Activated CD4-positive, alpha-beta memory T cell treated with anti-CD3 and anti-CD28 coated beads for 36 hours (primary cell): ENCODE measurements at regions of chr11 and their contacts with region 1.

Region 1: DNA sequence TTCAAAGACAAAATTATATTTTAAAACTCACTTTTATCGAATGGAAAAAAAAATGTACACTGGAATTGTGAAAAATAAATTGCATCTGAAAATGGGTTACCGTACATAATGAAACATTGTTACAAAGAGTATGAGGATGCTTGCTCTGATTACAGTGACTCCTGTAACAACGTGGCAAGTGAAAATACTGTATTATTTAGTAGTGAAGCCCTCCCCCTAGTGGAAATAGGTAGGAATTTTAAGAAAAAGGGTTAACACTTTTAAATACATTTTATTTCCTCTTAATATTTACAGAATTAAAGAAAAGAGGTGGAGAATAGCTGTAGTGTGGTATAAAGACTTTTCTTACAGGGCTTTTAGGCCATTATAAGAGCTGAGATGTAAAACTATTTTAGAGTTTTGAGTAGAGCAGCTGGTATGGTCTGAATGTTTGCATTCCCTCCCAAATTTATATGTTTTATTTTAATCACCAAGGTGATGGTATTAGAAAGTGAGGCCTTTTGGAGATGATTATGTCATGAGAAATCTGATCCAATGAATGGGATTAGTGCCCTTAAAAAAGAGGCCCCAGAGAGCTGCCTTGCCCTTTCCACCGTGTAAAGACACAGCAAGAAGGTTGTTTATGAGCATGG is 25.2 kb downstream of the FAM76B start:
- DNase-seq: no peak
- H3K4me3 Mint-ChIP-seq: no peak overlapping the region
- H3K27ac Mint-ChIP-seq: no peak overlapping the region
- H3K4me1 Mint-ChIP-seq: no peaks in the 10 kb centered on the region
- H3K27me3 Mint-ChIP-seq: no peaks in the 10 kb centered on the region

Region 2: GRCh38 chr11:95157824-95158223 is 606.6 kb before region 1 on chr11:
- CTCF ChIA-PET with region 1: interaction called, 207 read pairs
- POLR2A ChIA-PET with region 1: no interaction called
- intact Hi-C with region 1: no loop called
- DNase-seq: peak; percentile 30
- H3K4me3 Mint-ChIP-seq: no peak overlapping the region
- H3K27ac Mint-ChIP-seq: no peak overlapping the region
- H3K4me1 Mint-ChIP-seq: peaks cover 33% of the 10 kb centered on the region
- H3K27me3 Mint-ChIP-seq: no peaks in the 10 kb centered on the region

Region 3: DNA sequence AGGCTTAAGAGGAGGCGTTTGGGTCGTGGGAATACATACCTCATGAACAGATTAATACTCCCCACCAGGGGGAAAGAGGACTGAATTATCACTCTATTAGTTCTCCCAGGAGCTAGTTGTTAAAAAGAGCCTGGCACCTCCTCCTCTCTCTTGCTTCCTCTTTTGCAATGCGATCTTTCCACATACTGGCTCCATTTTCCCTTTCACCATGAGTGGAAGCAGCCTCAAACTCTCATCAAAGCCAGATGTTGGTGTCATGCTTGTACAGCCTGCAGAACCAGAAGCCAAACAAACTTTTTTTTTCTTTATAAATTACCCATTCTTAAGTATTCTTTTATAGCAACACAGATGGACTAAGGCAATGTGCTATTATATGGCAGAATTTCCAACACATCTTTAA is 233.3 kb before region 1 on chr11:
- CTCF ChIA-PET with region 1: no interaction called
- POLR2A ChIA-PET with region 1: no interaction called
- intact Hi-C with region 1: no loop called
- DNase-seq: no peak
- H3K4me3 Mint-ChIP-seq: no peak overlapping the region
- H3K27ac Mint-ChIP-seq: no peak overlapping the region
- H3K4me1 Mint-ChIP-seq: peaks cover 6% of the 10 kb centered on the region
- H3K27me3 Mint-ChIP-seq: no peaks in the 10 kb centered on the region